ENCODE measurements at regions of chr7 and their contacts with region 1.

Region 1: GRCh38 chr7:122528879-122529481 is 169.9 kb downstream of the RNF133 start:
- DNase-seq: no peak
- H3K4me3 ChIP-seq: no peak overlapping the region
- H3K27ac ChIP-seq: no peak overlapping the region
- H3K4me1 ChIP-seq: no peaks in the 10 kb centered on the region
- H3K27me3 ChIP-seq: no peaks in the 10 kb centered on the region
- CTCF ChIP-seq: peak in 2 of 4 experiments; percentile 22 to 42
- EP300 ChIP-seq: no peak
- POLR2A ChIP-seq: no peak

Region 2: GRCh38 chr7:122092964-122093797 is 435.8 kb before region 1 on chr7:
- intact Hi-C with region 1: loop called (anchors 10 kb)
- DNase-seq: no peak
- H3K4me3 ChIP-seq: no peak overlapping the region
- H3K27ac ChIP-seq: no peak overlapping the region
- H3K4me1 ChIP-seq: no peaks in the 10 kb centered on the region
- H3K27me3 ChIP-seq: no peaks in the 10 kb centered on the region
- CTCF ChIP-seq: peak in 3 of 4 experiments; percentile 39 to 78 (median 74)
- EP300 ChIP-seq: no peak
- POLR2A ChIP-seq: no peak

Region 3: GRCh38 chr7:122219253-122219865 is 309.6 kb before region 1 on chr7:
- intact Hi-C with region 1: loop called (anchors 5 kb)
- DNase-seq: no peak
- H3K4me3 ChIP-seq: no peak overlapping the region
- H3K27ac ChIP-seq: no peak overlapping the region
- H3K4me1 ChIP-seq: no peaks in the 10 kb centered on the region
- H3K27me3 ChIP-seq: no peaks in the 10 kb centered on the region
- CTCF ChIP-seq: peak in 3 of 4 experiments; percentile 11 to 50 (median 32)
- EP300 ChIP-seq: no peak
- POLR2A ChIP-seq: no peak

Measured in sigmoid colon (tissue), 7 donors.